ENCODE measurements at regions of chr2 and their contacts with region 1.

Region 1: GRCh38 chr2:170928824-170929685 is at the start of gene GORASP2:
- DNase-seq: peak; percentile 97 to 99 (median 98)
- ATAC-seq: peak; percentile 94
- H3K4me3 ChIP-seq: peak within 1 kb of the TSS; percentile 88
- H3K4me3 Mint-ChIP-seq: peak within 1 kb of the TSS; percentile 89 to 97 (median 95)
- H3K27ac ChIP-seq: peak within 1 kb of the TSS; percentile 87
- H3K27ac Mint-ChIP-seq: peak within 1 kb of the TSS; percentile 93 to 96 (median 95)
- H3K4me1 ChIP-seq: peaks cover 18 to 32% of the 10 kb centered on the region in 2 donors
- H3K4me1 Mint-ChIP-seq: peaks cover 24 to 56% (median 48%) of the 10 kb centered on the region in 7 donors
- H3K27me3 ChIP-seq: no peaks in the 10 kb centered on the region
- H3K27me3 Mint-ChIP-seq: no peaks in the 10 kb centered on the region
- total RNA-seq, gene GORASP2: 65.2 to 79.2 (median 73.2) TPM

Region 2: DNA sequence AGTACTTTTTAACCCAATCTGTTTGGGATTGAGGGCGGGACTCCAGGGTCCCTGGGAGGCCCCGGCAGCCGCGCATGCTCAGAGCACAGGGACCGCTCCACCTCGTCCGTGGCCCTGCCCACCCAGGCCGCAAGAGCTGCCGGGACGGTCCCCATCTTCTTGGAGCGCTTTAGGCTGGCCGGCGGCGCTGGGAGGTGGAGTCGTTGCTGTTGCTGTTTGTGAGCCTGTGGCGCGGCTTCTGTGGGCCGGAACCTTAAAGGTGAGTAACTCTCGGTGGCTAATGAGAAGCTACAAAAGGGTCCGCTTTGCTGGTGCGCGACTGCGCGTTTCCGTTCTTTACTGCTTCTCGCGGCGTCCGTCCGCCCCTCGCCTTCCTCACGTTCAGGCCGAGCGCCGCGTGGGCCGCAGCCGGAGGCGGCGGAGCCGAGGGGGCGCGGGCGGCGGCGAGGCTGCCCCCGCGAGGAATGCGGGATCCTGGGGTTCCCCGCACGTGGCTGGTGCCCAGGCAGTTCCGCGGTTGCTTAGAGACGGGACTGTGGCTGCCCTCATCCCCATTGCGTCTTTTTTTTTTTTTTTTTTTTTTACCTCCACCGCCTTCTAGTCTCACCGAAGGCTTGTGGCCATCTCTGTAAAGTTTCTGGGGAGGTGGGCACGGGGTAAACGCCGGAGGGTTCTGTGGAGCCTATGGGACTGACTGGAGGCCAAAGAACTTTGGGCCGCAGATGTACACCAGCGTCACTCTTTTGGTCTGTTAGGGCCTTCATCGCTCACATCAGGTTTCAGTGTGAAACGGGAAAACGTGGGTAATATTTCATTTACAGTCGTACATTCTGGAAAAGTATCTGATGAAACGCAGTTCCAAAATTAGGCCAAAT is 1130.1 kb before region 1 on chr2 and contains the start of gene SSB:
- CTCF ChIA-PET with region 1: no interaction called
- POLR2A ChIA-PET with region 1: no interaction called
- intact Hi-C with region 1: loop called in 1 of 2 experiments (anchors 1 kb)
- DNase-seq: peak; percentile 75 to 93 (median 83)
- ATAC-seq: peak; percentile 95
- H3K4me3 ChIP-seq: peak within 1 kb of the TSS; percentile 84
- H3K4me3 Mint-ChIP-seq: peak within 1 kb of the TSS; percentile 80 to 94 (median 90)
- H3K27ac ChIP-seq: peak within 1 kb of the TSS; percentile 95
- H3K27ac Mint-ChIP-seq: peak within 1 kb of the TSS; percentile 87 to 97 (median 94)
- H3K4me1 ChIP-seq: peaks cover 11 to 21% of the 10 kb centered on the region in 2 donors
- H3K4me1 Mint-ChIP-seq: peaks cover 10 to 50% (median 37%) of the 10 kb centered on the region in 7 donors
- H3K27me3 ChIP-seq: no peaks in the 10 kb centered on the region
- H3K27me3 Mint-ChIP-seq: peaks cover 0 to 9% (median 0%) of the 10 kb centered on the region in 5 donors
- total RNA-seq, gene SSB: 88.3 to 104 (median 102) TPM

Region 3: GRCh38 chr2:169877398-169877797 is 1051.7 kb before region 1 on chr2:
- CTCF ChIA-PET with region 1: no interaction called
- POLR2A ChIA-PET with region 1: no interaction called
- intact Hi-C with region 1: no loop called
- DNase-seq: peak in 1 of 9 donors; percentile 11
- ATAC-seq: no peak
- H3K4me3 ChIP-seq: no peak overlapping the region
- H3K4me3 Mint-ChIP-seq: no peak overlapping the region
- H3K27ac ChIP-seq: no peak overlapping the region
- H3K27ac Mint-ChIP-seq: no peak overlapping the region
- H3K4me1 ChIP-seq: no peaks in the 10 kb centered on the region
- H3K4me1 Mint-ChIP-seq: peaks cover 0 to 10% (median 5%) of the 10 kb centered on the region in 7 donors
- H3K27me3 ChIP-seq: no peaks in the 10 kb centered on the region
- H3K27me3 Mint-ChIP-seq: no peaks in the 10 kb centered on the region

Region 4: GRCh38 chr2:170873035-170873692 is 55.9 kb before region 1 on chr2:
- CTCF ChIA-PET with region 1: interaction called, 3 read pairs
- POLR2A ChIA-PET with region 1: no interaction called
- intact Hi-C with region 1: loop called in 1 of 2 experiments (anchors 1 kb)
- DNase-seq: peak; percentile 41 to 75 (median 61)
- ATAC-seq: peak; percentile 86
- H3K4me3 ChIP-seq: peak overlapping the region; percentile 27
- H3K4me3 Mint-ChIP-seq: peak overlapping the region; percentile 26 to 86 (median 74)
- H3K27ac ChIP-seq: no peak overlapping the region
- H3K27ac Mint-ChIP-seq: peak overlapping the region in 7 of 9 donors; percentile 12 to 70 (median 35)
- H3K4me1 ChIP-seq: peaks cover 2 to 8% of the 10 kb centered on the region in 2 donors
- H3K4me1 Mint-ChIP-seq: peaks cover 9 to 21% (median 17%) of the 10 kb centered on the region in 7 donors
- H3K27me3 ChIP-seq: no peaks in the 10 kb centered on the region
- H3K27me3 Mint-ChIP-seq: peaks cover 0 to 12% (median 8%) of the 10 kb centered on the region in 5 donors

Region 5: GRCh38 chr2:171086352-171087290 is 157.6 kb after region 1 on chr2:
- CTCF ChIA-PET with region 1: interaction called, 3 read pairs
- POLR2A ChIA-PET with region 1: interaction called, 9 read pairs
- intact Hi-C with region 1: loop called in 1 of 2 experiments (anchors 1 kb)
- DNase-seq: peak in 8 of 9 donors; percentile 34 to 76 (median 71)
- ATAC-seq: peak; percentile 82
- H3K4me3 ChIP-seq: peak overlapping the region; percentile 34
- H3K4me3 Mint-ChIP-seq: peak overlapping the region; percentile 69 to 92 (median 82)
- H3K27ac ChIP-seq: peak overlapping the region; percentile 71
- H3K27ac Mint-ChIP-seq: peak overlapping the region; percentile 86 to 99 (median 95)
- H3K4me1 ChIP-seq: peaks cover 7 to 68% of the 10 kb centered on the region in 2 donors
- H3K4me1 Mint-ChIP-seq: peaks cover 45 to 86% (median 76%) of the 10 kb centered on the region in 7 donors
- H3K27me3 ChIP-seq: no peaks in the 10 kb centered on the region
- H3K27me3 Mint-ChIP-seq: no peaks in the 10 kb centered on the region

Region 6: GRCh38 chr2:171574149-171574795 is 645.2 kb after region 1 on chr2:
- CTCF ChIA-PET with region 1: no interaction called
- POLR2A ChIA-PET with region 1: no interaction called
- intact Hi-C with region 1: loop called in 1 of 2 experiments (anchors 1 kb)
- DNase-seq: peak; percentile 50 to 84 (median 73)
- ATAC-seq: peak; percentile 99
- H3K4me3 ChIP-seq: no peak overlapping the region
- H3K4me3 Mint-ChIP-seq: peak overlapping the region in 6 of 10 donors; percentile 13 to 69 (median 16)
- H3K27ac ChIP-seq: no peak overlapping the region
- H3K27ac Mint-ChIP-seq: peak overlapping the region in 2 of 9 donors; percentile 31 to 60
- H3K4me1 ChIP-seq: peaks cover 0 to 3% of the 10 kb centered on the region in 2 donors
- H3K4me1 Mint-ChIP-seq: peaks cover 0 to 7% (median 6%) of the 10 kb centered on the region in 7 donors
- H3K27me3 ChIP-seq: no peaks in the 10 kb centered on the region
- H3K27me3 Mint-ChIP-seq: peaks cover 0 to 8% (median 0%) of the 10 kb centered on the region in 5 donors

Region 7: GRCh38 chr2:172427256-172427989 is 1498.4 kb after region 1 on chr2 and contains the start of gene ITGA6:
- CTCF ChIA-PET with region 1: no interaction called
- POLR2A ChIA-PET with region 1: no interaction called
- intact Hi-C with region 1: loop called in 1 of 2 experiments (anchors 1 kb)
- DNase-seq: peak; percentile 55 to 84 (median 80)
- ATAC-seq: peak; percentile 81
- H3K4me3 ChIP-seq: peak within 1 kb of the TSS; percentile 76
- H3K4me3 Mint-ChIP-seq: peak within 1 kb of the TSS in 7 of 10 donors; percentile 92 to 100 (median 98)
- H3K27ac ChIP-seq: peak within 1 kb of the TSS; percentile 76
- H3K27ac Mint-ChIP-seq: peak within 1 kb of the TSS in 8 of 9 donors; percentile 90 to 96 (median 95)
- H3K4me1 ChIP-seq: peaks cover 17 to 44% of the 10 kb centered on the region in 2 donors
- H3K4me1 Mint-ChIP-seq: peaks cover 21 to 65% (median 46%) of the 10 kb centered on the region in 7 donors
- H3K27me3 ChIP-seq: no peaks in the 10 kb centered on the region
- H3K27me3 Mint-ChIP-seq: peaks cover 0 to 82% (median 0%) of the 10 kb centered on the region in 5 donors
- total RNA-seq, gene ITGA6: 13.1 to 179 (median 135) TPM